ENCODE measurements at regions of chr22 and their contacts with region 1.

Region 1: GRCh38 chr22:37566903-37567820 is 6.9 kb downstream of the CDC42EP1 start:
- DNase-seq: peak; percentile 90
- ATAC-seq: peak; percentile 67

Region 2: GRCh38 chr22:37316875-37317371 is 250.2 kb before region 1 on chr22:
- intact Hi-C with region 1: loop called (anchors 10 kb)
- DNase-seq: peak; percentile 85
- ATAC-seq: peak; percentile 83

Region 3: GRCh38 chr22:37538590-37539357 is 28.4 kb before region 1 on chr22:
- intact Hi-C with region 1: loop called (anchors 1 kb)
- DNase-seq: peak; percentile 96
- ATAC-seq: peak; percentile 99

Region 4: DNA sequence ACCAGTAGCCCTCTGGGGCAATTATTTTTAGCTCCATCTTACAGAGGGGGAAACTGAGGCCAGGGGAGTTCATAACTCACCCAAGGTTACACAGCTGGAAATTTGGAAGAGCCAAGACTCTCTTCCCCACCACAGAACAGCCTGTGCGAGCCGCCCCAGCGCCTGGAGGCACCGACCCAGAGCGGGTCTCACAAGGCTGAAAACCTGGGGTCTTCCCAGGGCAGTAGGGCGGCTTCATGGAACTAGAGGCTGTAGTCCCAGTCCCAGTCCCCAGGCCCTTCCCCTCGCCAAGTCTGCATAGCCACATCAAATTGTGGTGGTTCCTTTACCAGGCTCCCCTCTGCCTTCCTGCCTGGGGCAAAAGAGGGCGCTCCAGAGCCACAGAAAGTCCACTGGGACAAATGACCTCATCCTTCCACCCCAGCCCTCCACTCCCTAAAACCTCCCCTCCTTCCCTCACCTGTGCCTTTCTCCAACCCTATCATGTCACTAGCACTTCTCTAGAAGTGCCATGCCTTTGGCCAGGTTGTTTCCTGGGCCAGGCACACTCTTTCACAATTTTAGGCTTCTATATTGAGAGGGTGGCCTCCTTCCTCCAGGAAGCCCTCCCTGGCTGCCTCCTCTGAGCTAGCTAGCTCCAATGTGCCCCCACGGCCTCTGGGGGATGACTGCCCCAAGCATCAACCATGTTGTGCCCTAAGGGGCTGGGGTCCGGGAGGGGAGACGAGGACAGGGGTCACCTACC is 22.0 kb before region 1 on chr22:
- intact Hi-C with region 1: loop called (anchors 1 kb)
- DNase-seq: no peak
- ATAC-seq: peak; percentile 40